ENCODE measurements at regions of chr10 and their contacts with region 1.

Region 1: GRCh38 chr10:29239569-29240472 is 49.0 kb upstream of the LYZL1 start:
- DNase-seq: peak; percentile 60
- H3K4me3 Mint-ChIP-seq: no peak overlapping the region
- H3K27ac Mint-ChIP-seq: no peak overlapping the region
- H3K4me1 Mint-ChIP-seq: no peaks in the 10 kb centered on the region
- H3K27me3 Mint-ChIP-seq: peaks cover 58% of the 10 kb centered on the region
- CTCF ChIP-seq: peak; percentile 32

Region 2: GRCh38 chr10:29141063-29141462 is 98.8 kb before region 1 on chr10:
- CTCF ChIA-PET with region 1: interaction called, 3 read pairs
- POLR2A ChIA-PET with region 1: no interaction called
- intact Hi-C with region 1: loop called (anchors 5 kb)
- DNase-seq: peak; percentile 34
- H3K4me3 Mint-ChIP-seq: no peak overlapping the region
- H3K27ac Mint-ChIP-seq: peak overlapping the region; percentile 72
- H3K4me1 Mint-ChIP-seq: peaks cover 28% of the 10 kb centered on the region
- H3K27me3 Mint-ChIP-seq: no peaks in the 10 kb centered on the region
- CTCF ChIP-seq: no peak

Region 3: GRCh38 chr10:29304264-29305030 is 64.6 kb after region 1 on chr10:
- CTCF ChIA-PET with region 1: no interaction called
- POLR2A ChIA-PET with region 1: no interaction called
- intact Hi-C with region 1: loop called (anchors 1 kb)
- DNase-seq: peak; percentile 78
- H3K4me3 Mint-ChIP-seq: no peak overlapping the region
- H3K27ac Mint-ChIP-seq: no peak overlapping the region
- H3K4me1 Mint-ChIP-seq: no peaks in the 10 kb centered on the region
- H3K27me3 Mint-ChIP-seq: peaks cover 12% of the 10 kb centered on the region
- CTCF ChIP-seq: peak; percentile 83